Cardiac septum (tissue), 1 donor: ENCODE measurements at regions of chr1 and their contacts with region 1.

Region 1: DNA sequence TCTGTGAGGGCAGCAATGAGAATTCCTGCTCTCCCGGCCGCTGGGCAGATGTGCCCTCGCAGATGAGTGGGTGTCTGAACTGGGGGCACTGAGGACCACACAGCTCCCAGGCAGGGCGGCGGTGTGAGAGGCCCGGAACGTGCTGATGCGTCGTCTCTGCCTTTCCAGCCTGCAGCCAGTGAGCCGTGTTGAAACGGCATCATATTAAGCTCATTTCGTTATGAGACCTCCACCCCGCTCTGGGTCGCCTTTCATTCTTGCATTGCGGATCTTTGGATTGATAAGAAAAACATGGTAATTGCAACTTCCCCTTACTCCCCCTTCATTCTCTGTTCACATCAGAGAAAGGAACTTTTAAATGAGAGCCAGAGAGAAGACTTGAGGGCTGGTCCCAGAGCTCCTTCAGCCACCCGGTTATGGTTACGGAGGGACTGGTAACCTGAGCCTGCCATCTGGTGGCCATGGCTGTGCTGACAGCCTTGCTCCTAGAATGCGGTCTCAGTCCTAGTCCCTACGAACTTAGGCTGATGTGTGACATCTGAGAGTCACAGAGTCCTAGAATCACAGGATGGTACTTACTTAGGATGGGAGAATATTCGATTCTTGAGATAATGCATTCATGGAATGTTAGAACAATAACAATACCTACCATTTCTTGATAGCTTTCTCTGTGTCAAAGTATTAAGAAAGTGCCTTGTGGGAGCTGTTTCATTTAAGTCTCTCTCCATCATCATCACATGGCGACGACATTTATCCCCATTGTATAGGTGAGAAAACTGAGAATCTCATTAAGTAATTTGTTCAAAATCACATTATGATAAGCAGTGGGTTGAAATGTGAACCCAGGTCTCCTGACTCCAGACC is 271.0 kb downstream of the TRABD2B start:
- DNase-seq: no peak

Region 2: DNA sequence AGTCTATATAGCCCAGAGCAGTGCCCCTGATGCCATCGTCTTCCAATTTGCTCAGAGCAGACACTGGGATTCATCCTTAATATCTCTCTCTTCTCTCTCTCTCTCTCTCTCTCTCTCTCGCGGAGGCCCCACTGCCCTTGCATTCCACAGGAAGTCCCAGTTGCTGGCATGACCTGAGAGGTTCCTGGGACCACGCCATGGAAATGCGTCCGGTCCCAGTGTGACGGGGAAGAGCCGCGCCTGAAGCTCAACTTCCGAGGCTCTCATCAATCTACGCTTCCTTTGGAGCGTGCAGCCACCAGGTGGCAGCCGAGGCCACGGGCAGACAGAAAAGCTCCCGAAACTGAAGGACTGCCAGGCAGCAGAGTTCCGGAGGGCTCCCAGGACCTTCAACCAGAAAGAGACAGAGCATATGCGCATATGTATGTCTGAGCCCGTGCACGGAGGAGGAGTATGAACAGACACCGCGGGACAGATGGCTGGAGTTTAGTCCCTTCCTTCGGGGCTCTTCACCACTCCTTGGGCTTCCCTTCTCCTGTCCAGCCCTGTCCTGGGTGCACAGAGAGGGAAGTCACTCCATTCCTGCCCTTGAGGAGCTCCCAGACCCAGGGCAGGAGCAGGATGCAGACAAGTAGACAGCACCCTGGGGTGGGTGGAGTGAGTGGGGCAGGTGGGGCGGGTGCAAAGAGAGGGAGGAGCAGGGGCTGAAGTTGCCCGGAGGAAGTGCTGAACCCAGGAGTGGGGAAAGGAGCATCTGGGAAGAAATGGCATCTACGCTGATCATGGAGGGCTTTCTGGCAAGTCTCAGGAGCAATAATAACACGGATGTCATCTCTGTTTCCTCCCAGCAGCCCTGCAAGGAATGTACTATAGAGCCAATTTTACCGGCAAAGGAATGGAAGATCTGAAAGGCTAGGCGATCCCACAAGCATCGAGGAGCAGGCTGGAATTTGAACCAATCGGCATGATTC is 546.9 kb before region 1 on chr1:
- intact Hi-C with region 1: loop called (anchors 5 kb)
- DNase-seq: peak; percentile 87

Region 3: GRCh38 chr1:47432071-47433036 is 293.9 kb before region 1 on chr1:
- intact Hi-C with region 1: loop called (anchors 5 kb)
- DNase-seq: no peak

Region 4: DNA sequence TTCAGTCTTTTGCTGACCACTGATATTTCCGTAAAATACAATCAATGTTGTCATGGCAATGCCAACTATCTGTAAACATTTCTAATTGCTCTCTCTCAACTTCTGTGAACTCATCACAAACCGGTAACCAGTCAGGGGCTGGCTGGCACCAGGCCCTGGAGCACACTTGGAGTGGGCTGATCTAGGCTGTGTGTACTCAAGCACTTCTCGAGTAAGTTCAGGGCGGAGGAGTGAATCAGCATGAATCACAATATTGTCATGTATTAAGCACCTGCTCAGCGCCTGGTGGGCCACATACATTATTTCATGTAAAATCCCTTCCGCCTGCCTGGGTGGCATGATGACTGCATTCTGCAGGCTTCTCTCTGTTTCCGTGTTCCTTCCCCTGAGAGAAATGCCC is 76.0 kb before region 1 on chr1:
- intact Hi-C with region 1: no loop called
- DNase-seq: no peak

Region 5: GRCh38 chr1:47745725-47746597 is 19.7 kb after region 1 on chr1:
- intact Hi-C with region 1: no loop called
- DNase-seq: peak; percentile 33